MCF 10A (cell line): ENCODE measurements at regions of chr2 and their contacts with region 1.

Region 1: DNA sequence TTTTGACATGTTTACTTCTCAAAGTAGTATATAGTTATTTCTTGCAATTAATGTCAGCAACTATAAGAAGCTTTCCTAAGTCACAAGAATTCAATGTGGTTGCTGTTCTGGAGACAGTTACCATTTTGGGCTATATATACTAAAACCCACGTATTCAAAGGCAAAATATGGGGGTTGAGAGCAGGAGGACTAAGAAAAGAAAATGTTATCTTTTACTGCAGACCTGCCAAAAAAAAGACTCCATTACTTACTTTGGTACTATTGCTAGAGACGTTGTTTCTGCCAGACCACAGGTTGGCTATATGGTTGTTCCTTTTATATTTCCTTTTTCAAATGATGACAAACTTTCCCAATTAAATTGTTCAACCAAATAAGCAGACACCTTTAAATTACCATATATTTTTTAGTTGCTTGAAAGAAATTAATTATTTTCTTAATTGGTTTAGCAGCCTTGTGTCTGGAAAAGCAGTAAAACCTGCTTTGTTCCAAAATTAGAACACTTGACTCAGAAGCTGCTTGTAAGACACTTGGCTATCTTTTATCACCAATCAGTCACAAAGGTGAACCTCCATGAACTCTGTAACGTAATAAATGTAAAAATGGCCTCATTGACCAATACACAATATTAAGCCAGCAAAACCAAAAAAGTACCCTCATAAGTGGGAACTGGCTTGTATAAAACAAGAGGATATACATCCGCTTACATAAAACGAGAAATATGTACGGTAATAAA is 8.2 kb upstream of the OSGEPL1 start:
- DNase-seq: no peak
- H3K4me3 Mint-ChIP-seq: no peak overlapping the region
- H3K27ac Mint-ChIP-seq: no peak overlapping the region
- H3K4me1 Mint-ChIP-seq: no peaks in the 10 kb centered on the region
- H3K27me3 Mint-ChIP-seq: no peaks in the 10 kb centered on the region
- CTCF ChIP-seq: no peak

Region 2: GRCh38 chr2:189337656-189338055 is 433.1 kb before region 1 on chr2:
- CTCF ChIA-PET with region 1: no interaction called
- POLR2A ChIA-PET with region 1: no interaction called
- intact Hi-C with region 1: no loop called
- DNase-seq: peak; percentile 13
- H3K4me3 Mint-ChIP-seq: no peak overlapping the region
- H3K27ac Mint-ChIP-seq: peak overlapping the region; percentile 88
- H3K4me1 Mint-ChIP-seq: peaks cover 6% of the 10 kb centered on the region
- H3K27me3 Mint-ChIP-seq: no peaks in the 10 kb centered on the region
- CTCF ChIP-seq: no peak

Region 3: DNA sequence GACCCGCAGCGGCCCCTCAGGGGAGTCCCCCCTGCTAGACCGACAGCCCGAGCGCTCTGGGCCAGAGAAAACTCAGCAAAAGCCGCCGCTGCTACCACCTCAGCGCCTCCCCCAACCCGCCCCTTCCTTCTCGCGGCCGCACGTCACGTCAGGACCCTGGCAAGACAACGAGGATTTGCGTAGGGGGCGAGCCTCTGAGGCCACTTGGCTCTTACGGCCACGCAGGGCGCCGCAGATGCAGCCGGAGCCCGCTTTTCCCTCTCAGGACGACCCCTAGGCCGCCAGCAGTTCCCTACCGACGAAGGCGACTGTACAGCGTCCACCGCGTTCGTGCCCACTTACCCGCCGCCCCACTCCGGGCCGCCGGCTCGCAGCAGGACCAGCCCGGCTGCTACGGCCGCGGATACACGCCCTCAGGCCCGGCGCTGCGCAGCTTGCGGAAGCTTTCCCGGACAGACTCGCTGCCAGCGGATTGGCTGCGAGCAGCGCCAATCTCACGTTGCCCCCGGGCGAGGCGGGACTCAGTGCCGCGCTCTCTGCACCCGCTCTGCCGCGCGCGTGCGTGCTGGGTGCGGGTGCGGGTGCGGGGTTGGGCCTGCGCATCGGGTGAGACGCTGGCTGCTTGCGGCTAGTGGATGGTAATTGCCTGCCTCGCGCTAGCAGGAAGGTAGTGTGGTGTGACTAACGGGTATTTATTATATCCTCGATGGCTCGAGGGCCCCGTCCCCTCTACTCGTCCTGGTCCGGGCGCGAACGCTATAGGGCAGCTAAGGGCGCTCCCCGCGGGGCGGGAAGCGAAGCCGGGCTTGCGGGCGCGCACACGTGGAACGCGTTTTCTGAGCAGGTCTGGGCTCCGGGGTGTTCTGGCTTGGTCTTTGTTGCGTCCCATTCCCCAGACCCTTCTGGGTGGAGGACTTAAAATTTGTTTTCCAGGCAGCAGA is 13.4 kb after region 1 on chr2 and contains the starts of genes ORMDL1 and PMS1:
- CTCF ChIA-PET with region 1: interaction called, 4 read pairs
- POLR2A ChIA-PET with region 1: interaction called, 86 read pairs
- intact Hi-C with region 1: no loop called
- DNase-seq: peak; percentile 94
- H3K4me3 Mint-ChIP-seq: peak within 1 kb of the TSS; percentile 90
- H3K27ac Mint-ChIP-seq: peak within 1 kb of the TSS; percentile 73
- H3K4me1 Mint-ChIP-seq: peaks cover 41% of the 10 kb centered on the region
- H3K27me3 Mint-ChIP-seq: no peaks in the 10 kb centered on the region
- CTCF ChIP-seq: no peak
- total RNA-seq, gene ORMDL1: 83.0 and 85.1 TPM in 2 replicates
- total RNA-seq, gene PMS1: 38.3 and 50.9 TPM in 2 replicates